Right cardiac atrium (tissue), 5 donors: ENCODE measurements at regions of chr3 and their contacts with region 1.

Region 1: GRCh38 chr3:181709537-181710279 is 2.0 kb upstream of the SOX2 start:
- DNase-seq: peak; percentile 68 to 89 (median 78)
- ATAC-seq: no peak
- H3K4me3 ChIP-seq: peak overlapping the region; percentile 23
- H3K27ac ChIP-seq: no peak overlapping the region
- H3K4me1 ChIP-seq: no peaks in the 10 kb centered on the region
- H3K27me3 ChIP-seq: peaks cover 2% of the 10 kb centered on the region

Region 2: DNA sequence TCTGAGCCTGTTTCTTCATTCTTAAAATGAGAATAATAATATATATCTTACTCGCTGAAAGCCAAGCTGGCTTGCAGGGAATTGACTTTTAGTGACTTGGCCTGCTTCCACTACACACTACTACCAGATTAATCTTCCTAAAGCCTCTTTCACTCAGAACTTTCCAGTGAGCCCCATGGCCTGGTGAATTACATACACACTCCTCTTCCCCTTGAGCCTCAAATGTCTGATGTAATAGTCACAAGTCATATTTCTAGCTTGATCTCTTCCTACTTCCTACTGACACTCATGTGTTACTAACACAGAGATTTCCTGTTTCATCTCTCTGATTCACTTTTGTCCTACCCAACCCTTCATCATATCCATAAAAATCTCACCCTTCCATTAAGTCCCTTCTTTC is 80.7 kb before region 1 on chr3:
- intact Hi-C with region 1: no loop called
- DNase-seq: no peak
- ATAC-seq: no peak
- H3K4me3 ChIP-seq: no peak overlapping the region
- H3K27ac ChIP-seq: no peak overlapping the region
- H3K4me1 ChIP-seq: no peaks in the 10 kb centered on the region
- H3K27me3 ChIP-seq: no peaks in the 10 kb centered on the region

Region 3: GRCh38 chr3:182241766-182242488 is 532.2 kb after region 1 on chr3:
- intact Hi-C with region 1: loop called in 1 of 4 experiments (anchors 10 kb)
- DNase-seq: peak; percentile 61 to 83 (median 67)
- ATAC-seq: peak; percentile 97 to 98
- H3K4me3 ChIP-seq: no peak overlapping the region
- H3K27ac ChIP-seq: peak overlapping the region; percentile 55
- H3K4me1 ChIP-seq: no peaks in the 10 kb centered on the region
- H3K27me3 ChIP-seq: no peaks in the 10 kb centered on the region

Region 4: GRCh38 chr3:182683453-182683852 is 973.7 kb after region 1 on chr3:
- intact Hi-C with region 1: loop called in 3 of 4 experiments (anchors 5 to 10 kb)
- DNase-seq: peak in 2 of 3 donors; percentile 26 to 56
- ATAC-seq: peak; percentile 82 to 89
- H3K4me3 ChIP-seq: peak overlapping the region; percentile 70
- H3K27ac ChIP-seq: no peak overlapping the region
- H3K4me1 ChIP-seq: no peaks in the 10 kb centered on the region
- H3K27me3 ChIP-seq: no peaks in the 10 kb centered on the region